BJ (cell line): ENCODE measurements at regions of chr2 and their contacts with region 1.

Region 1: GRCh38 chr2:58291726-58292438 is 50.8 kb upstream of the FANCL start:
- DNase-seq: no peak
- H3K4me3 ChIP-seq: no peak overlapping the region
- H3K27me3 ChIP-seq: no peaks in the 10 kb centered on the region
- CTCF ChIP-seq: no peak

Region 2: DNA sequence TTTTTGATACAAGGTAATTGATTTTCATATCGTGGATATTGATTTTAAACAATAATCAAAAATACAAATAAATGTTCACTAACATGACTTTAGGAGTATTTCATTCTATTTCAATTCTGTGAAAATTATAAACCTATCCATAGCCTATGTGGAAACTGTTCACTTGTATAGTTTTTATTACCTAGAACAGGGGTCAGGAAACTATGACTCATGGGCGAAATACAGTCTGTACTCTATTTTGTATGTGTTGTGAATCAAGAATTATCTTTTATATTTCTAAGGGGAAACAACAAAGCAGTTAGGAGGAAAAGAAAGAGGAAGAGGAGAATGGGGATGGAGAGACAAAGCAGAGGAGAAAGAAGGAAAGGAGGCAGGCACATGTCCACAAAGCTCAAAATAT is 427.0 kb before region 1 on chr2:
- CTCF ChIA-PET with region 1: no interaction called
- POLR2A ChIA-PET with region 1: interaction called, 21 read pairs
- DNase-seq: no peak
- H3K4me3 ChIP-seq: no peak overlapping the region
- H3K27me3 ChIP-seq: no peaks in the 10 kb centered on the region
- CTCF ChIP-seq: no peak